ENCODE measurements at regions of chr10 and their contacts with region 1.

Region 1: DNA sequence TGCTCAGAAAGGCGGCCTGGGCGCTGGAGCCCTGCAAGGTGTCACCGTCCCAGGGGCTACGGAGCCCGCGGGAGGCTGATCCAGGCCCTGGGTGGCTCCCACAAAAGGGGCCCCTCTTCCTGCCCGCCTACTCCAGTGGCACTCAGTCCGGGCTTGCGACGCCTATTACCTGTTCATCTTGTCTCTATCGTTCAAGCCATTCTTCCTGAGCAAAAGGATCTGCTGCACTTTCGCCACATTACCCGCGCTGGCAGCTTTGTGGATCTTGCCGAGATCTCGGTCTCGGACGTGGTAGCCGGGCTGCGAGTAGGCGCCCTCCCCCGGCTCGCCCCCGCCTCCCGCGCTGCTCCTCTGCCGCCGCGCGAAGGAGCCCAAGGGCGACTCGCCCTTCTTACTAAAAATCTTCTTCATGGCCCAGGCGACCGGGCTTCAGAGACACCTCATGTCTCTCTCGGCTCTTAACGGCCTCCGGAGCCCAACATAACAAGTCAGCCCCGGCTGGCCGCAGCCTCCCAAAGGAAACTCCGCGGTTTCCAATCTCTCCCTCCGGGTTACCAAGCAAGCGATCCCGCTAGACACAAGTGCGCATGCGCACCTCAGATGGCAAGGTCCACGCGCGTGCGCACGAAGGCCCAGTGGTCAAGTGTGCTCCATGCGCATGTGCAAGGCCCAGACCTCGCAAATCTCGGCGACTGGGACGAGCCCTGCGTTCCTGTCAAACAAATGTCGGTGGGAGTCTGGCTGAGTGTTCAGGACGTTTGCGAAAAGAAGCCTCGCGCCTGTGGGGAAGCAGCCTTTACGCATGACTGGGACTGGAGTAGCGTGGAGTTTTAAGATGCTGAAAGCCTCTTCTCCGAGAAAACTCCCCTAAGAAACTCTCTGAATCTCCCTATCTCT is at the start of gene ANKRD26:
- DNase-seq: peak; percentile 94
- ATAC-seq: peak; percentile 89
- H3K4me3 ChIP-seq: peak within 1 kb of the TSS; percentile 73
- H3K27ac ChIP-seq: peak within 1 kb of the TSS; percentile 93
- H3K4me1 ChIP-seq: peaks cover 9% of the 10 kb centered on the region
- H3K27me3 ChIP-seq: no peaks in the 10 kb centered on the region
- CTCF ChIP-seq: 0 out of 6 replicates have a peak, but pooled peaks of 1 of the 3 experiments have one; percentile 1
- EP300 ChIP-seq: no peak
- POLR2A ChIP-seq: peak; percentile 85
- RAD21 ChIP-seq: no peak
- polyA plus RNA-seq, gene ANKRD26: 2.3 to 3.4 TPM

Region 2: GRCh38 chr10:26969145-26969926 is 130.8 kb before region 1 on chr10:
- CTCF ChIA-PET with region 1: no interaction called
- POLR2A ChIA-PET with region 1: no interaction called
- RAD21 ChIA-PET with region 1: no interaction called
- SMC1A ChIA-PET with region 1: no interaction called
- in situ Hi-C with region 1: no loop called
- intact Hi-C with region 1: loop called (anchors 2 kb)
- DNase-seq: peak; percentile 75
- ATAC-seq: peak; percentile 89
- H3K4me3 ChIP-seq: peak overlapping the region; percentile 26; the same call in 1 of the 2 replicates
- H3K27ac ChIP-seq: peak overlapping the region; percentile 62
- H3K4me1 ChIP-seq: peaks cover 29% of the 10 kb centered on the region
- H3K27me3 ChIP-seq: no peaks in the 10 kb centered on the region
- CTCF ChIP-seq: no peak
- EP300 ChIP-seq: no peak; a peak in 1 of 4 replicates
- POLR2A ChIP-seq: no peak
- RAD21 ChIP-seq: no peak

Region 3: DNA sequence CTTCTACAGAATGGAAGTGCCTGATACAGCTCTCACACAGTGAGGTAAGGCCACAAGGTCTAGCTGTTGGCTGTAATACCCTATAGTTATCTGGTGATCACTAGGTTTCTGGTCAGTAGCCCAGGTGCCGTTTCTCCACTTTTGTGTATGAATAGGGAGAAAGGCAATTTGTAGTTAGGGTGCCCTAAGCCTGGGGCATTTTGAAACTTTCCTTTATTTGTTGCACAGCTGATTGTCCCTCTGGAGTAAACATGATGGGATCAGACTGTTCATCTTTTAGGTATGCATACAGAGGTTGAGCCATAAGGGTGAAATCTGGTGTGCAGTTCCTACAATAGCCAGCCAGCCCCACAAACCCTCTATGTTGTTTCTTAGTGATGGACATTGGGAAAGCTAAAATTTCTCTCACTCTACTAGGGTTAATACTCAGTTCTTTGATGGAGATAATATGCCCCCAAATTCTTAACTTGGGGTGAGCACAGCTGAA is 112.3 kb before region 1 on chr10:
- CTCF ChIA-PET with region 1: no interaction called
- POLR2A ChIA-PET with region 1: no interaction called
- RAD21 ChIA-PET with region 1: no interaction called
- SMC1A ChIA-PET with region 1: no interaction called
- in situ Hi-C with region 1: no loop called
- intact Hi-C with region 1: no loop called
- DNase-seq: no peak
- ATAC-seq: no peak
- H3K4me3 ChIP-seq: no peak overlapping the region
- H3K27ac ChIP-seq: no peak overlapping the region
- H3K4me1 ChIP-seq: no peaks in the 10 kb centered on the region
- H3K27me3 ChIP-seq: no peaks in the 10 kb centered on the region
- CTCF ChIP-seq: no peak
- EP300 ChIP-seq: no peak
- POLR2A ChIP-seq: no peak
- RAD21 ChIP-seq: no peak

Measured in GM12878 (cell line).